Activated naive CD4-positive, alpha-beta T cell treated with anti-CD3 and anti-CD28 coated beads for 36 hours (primary cell): ENCODE measurements at regions of chr16 and their contacts with region 1.

Region 1: GRCh38 chr16:67935402-67936123 is 1.1 kb downstream of the PSMB10 start:
- DNase-seq: peak; percentile 98
- H3K4me3 Mint-ChIP-seq: peak overlapping the region; percentile 100
- H3K27ac Mint-ChIP-seq: peak overlapping the region; percentile 94
- H3K4me1 Mint-ChIP-seq: peaks cover 41% of the 10 kb centered on the region
- H3K27me3 Mint-ChIP-seq: no peaks in the 10 kb centered on the region

Region 2: GRCh38 chr16:66728117-66728787 is 1207.3 kb before region 1 on chr16:
- CTCF ChIA-PET with region 1: no interaction called
- intact Hi-C with region 1: no loop called
- DNase-seq: peak; percentile 12
- H3K4me3 Mint-ChIP-seq: no peak overlapping the region
- H3K27ac Mint-ChIP-seq: no peak overlapping the region
- H3K4me1 Mint-ChIP-seq: no peaks in the 10 kb centered on the region
- H3K27me3 Mint-ChIP-seq: no peaks in the 10 kb centered on the region

Region 3: DNA sequence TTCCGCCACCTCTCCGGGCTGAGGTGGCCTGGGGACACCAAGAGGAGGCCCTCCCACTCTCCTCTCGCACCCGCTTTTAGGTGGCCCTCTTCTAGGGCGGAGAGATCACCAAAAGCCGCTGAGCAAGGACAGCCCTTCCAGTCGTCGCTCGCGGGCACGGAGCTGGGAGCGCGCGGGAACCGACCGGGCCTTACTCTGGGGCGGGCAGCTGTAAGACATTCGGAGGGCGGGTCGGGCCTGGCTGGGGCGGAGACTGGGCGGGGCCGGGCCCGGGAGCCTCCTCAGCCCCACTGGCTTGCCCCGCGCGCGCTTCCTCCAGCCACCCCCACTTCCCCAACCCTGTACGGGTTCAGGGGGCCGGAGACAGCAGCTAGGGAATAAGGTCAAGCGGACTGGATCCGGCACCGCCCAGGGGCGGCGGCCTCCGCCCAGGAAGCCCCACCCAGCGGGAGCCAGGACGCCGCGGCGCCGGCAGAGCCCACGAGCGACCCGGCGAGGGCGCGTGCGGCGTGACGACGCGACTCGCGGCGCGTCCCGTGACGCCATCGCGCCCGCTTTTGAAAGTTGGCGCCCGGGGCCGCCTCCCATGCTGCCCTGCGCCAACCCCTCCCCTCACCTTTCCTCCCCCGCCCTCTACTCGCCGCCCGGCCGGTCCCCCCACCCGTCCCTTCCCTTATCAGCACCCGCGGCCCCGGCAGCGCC is 373.6 kb before region 1 on chr16:
- CTCF ChIA-PET with region 1: no interaction called
- intact Hi-C with region 1: loop called (anchors 1 kb)
- DNase-seq: peak; percentile 98
- H3K4me3 Mint-ChIP-seq: peak overlapping the region; percentile 78
- H3K27ac Mint-ChIP-seq: peak overlapping the region; percentile 86
- H3K4me1 Mint-ChIP-seq: peaks cover 45% of the 10 kb centered on the region
- H3K27me3 Mint-ChIP-seq: no peaks in the 10 kb centered on the region

Region 4: GRCh38 chr16:67816240-67817031 is 119.1 kb before region 1 on chr16:
- CTCF ChIA-PET with region 1: interaction called, 12 read pairs
- intact Hi-C with region 1: no loop called
- DNase-seq: peak; percentile 93
- H3K4me3 Mint-ChIP-seq: no peak overlapping the region
- H3K27ac Mint-ChIP-seq: no peak overlapping the region
- H3K4me1 Mint-ChIP-seq: peaks cover 4% of the 10 kb centered on the region
- H3K27me3 Mint-ChIP-seq: no peaks in the 10 kb centered on the region

Region 5: DNA sequence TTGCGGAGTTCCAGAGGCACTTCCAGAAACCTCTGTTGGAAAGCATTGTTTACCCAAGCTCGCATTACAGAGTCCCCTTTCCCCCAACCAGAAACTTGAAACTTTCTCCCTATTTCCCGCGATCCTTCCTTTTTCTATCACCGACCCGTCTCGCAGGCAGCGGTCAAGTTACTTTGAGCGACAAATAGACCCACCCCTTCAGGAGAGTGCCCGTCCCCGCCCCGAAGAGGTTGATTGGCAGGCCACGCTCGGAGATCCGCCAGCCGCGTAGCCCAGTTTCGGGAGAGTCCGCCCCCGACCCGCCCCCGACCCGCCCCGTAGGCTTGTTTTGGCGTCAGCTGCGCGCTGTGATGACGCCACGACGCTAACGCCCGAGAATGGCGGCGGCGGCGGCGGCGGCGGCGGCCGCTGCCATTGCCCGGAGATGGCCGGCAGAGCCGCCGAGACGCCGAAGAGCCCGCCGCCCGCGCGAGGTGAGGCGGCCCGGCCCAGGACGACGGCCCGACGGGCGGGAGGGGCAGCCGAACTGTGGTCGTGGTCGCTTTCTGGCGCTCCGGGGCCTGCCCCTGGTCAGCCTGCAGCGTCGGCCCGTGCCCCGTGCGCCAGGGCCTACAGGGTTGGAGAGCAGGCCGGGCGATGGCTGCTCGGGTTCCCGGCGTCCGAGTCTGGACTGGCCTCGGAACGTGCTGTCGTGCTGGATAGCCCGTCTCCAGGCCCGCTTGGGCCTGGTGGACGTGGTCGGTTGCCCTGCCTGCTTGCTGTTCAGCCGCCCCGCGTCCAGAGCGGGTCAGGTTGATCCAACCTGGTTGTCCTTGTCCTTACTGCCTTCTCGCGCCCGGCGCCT is 42.4 kb before region 1 on chr16 and contains the start of gene PSKH1:
- CTCF ChIA-PET with region 1: no interaction called
- intact Hi-C with region 1: loop called (anchors 1 kb)
- DNase-seq: peak; percentile 98
- H3K4me3 Mint-ChIP-seq: peak within 1 kb of the TSS; percentile 79
- H3K27ac Mint-ChIP-seq: peak within 1 kb of the TSS; percentile 82
- H3K4me1 Mint-ChIP-seq: peaks cover 39% of the 10 kb centered on the region
- H3K27me3 Mint-ChIP-seq: no peaks in the 10 kb centered on the region
- total RNA-seq, gene PSKH1: 7.1 to 8.0 TPM

Region 6: GRCh38 chr16:67979955-67980678 is 44.6 kb after region 1 on chr16 and contains the start of gene DPEP3:
- CTCF ChIA-PET with region 1: no interaction called
- intact Hi-C with region 1: loop called (anchors 5 kb)
- DNase-seq: no peak
- H3K4me3 Mint-ChIP-seq: no peak within 1 kb of the TSS
- H3K27ac Mint-ChIP-seq: no peak within 1 kb of the TSS
- H3K4me1 Mint-ChIP-seq: peaks cover 24% of the 10 kb centered on the region
- H3K27me3 Mint-ChIP-seq: no peaks in the 10 kb centered on the region
- total RNA-seq, gene DPEP3: 0.19 TPM in 1 of 2 experiments, not detected in the other

Region 7: DNA sequence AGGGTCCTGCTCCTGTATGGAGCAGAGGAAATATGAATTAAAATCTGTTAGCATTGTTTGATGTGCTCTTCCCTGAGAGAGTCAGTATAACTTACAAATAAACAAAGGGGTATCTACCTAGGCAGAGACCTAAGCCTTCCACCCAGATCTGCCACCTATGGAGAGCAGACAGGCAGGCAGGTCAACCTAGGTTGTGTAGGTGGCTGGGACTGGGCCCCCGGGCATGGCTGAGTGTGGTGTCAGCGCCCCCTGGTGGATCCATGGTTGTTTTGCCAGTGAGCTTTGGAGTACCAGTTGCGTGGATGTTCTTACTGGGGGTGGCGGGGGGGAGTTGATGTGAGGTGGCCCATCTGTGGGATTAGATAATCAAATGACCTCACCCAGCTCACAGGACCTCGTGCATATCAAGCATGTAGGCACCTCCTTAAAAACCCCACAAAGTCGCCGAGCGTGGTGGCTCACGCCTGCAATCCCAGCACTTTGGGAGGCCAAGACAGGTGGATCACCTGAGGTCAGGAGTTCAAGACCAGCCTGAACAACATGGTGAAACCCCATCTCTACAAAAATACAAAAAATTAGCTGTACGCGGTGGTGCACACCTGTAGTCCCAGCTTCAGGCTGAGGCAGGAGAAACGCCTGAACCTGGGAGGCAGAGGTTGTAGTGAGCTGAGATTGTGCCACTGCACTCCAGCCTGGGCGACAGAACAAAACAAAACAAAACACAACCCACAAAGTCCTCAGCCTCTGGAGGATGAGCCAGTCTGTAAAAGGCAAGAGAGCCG is 105.1 kb after region 1 on chr16:
- CTCF ChIA-PET with region 1: interaction called, 13 read pairs
- intact Hi-C with region 1: loop called (anchors 1 kb)
- DNase-seq: peak; percentile 95
- H3K4me3 Mint-ChIP-seq: no peak overlapping the region
- H3K27ac Mint-ChIP-seq: no peak overlapping the region
- H3K4me1 Mint-ChIP-seq: peaks cover 7% of the 10 kb centered on the region
- H3K27me3 Mint-ChIP-seq: no peaks in the 10 kb centered on the region